ENCODE measurements at regions of chr1 and their contacts with region 1.

Region 1: GRCh38 chr1:247373721-247374141 is 42.1 kb upstream of the ZNF496 start:
- DNase-seq: peak; percentile 82
- ATAC-seq: peak; percentile 78
- H3K4me3 Mint-ChIP-seq: peak overlapping the region; percentile 20
- H3K27ac Mint-ChIP-seq: no peak overlapping the region
- H3K4me1 Mint-ChIP-seq: peaks cover 2% of the 10 kb centered on the region
- H3K27me3 Mint-ChIP-seq: peaks cover 11% of the 10 kb centered on the region

Region 2: GRCh38 chr1:247131236-247131635 is 242.5 kb before region 1 on chr1:
- CTCF ChIA-PET with region 1: no interaction called
- POLR2A ChIA-PET with region 1: no interaction called
- intact Hi-C with region 1: no loop called
- DNase-seq: no peak
- ATAC-seq: no peak
- H3K4me3 Mint-ChIP-seq: no peak overlapping the region
- H3K27ac Mint-ChIP-seq: no peak overlapping the region
- H3K4me1 Mint-ChIP-seq: peaks cover 3% of the 10 kb centered on the region
- H3K27me3 Mint-ChIP-seq: no peaks in the 10 kb centered on the region

Region 3: GRCh38 chr1:247360991-247361731 is 12.6 kb before region 1 on chr1:
- CTCF ChIA-PET with region 1: interaction called, 13 read pairs
- POLR2A ChIA-PET with region 1: no interaction called
- intact Hi-C with region 1: no loop called
- DNase-seq: peak; percentile 20
- ATAC-seq: peak; percentile 51
- H3K4me3 Mint-ChIP-seq: no peak overlapping the region
- H3K27ac Mint-ChIP-seq: no peak overlapping the region
- H3K4me1 Mint-ChIP-seq: peaks cover 14% of the 10 kb centered on the region
- H3K27me3 Mint-ChIP-seq: peaks cover 42% of the 10 kb centered on the region

Region 4: GRCh38 chr1:247487057-247487456 is 113.3 kb after region 1 on chr1:
- CTCF ChIA-PET with region 1: interaction called, 62 read pairs
- POLR2A ChIA-PET with region 1: no interaction called
- intact Hi-C with region 1: loop called (anchors 1 kb)
- DNase-seq: peak; percentile 38
- ATAC-seq: peak; percentile 80
- H3K4me3 Mint-ChIP-seq: no peak overlapping the region
- H3K27ac Mint-ChIP-seq: no peak overlapping the region
- H3K4me1 Mint-ChIP-seq: no peaks in the 10 kb centered on the region
- H3K27me3 Mint-ChIP-seq: peaks cover 8% of the 10 kb centered on the region

Region 5: DNA sequence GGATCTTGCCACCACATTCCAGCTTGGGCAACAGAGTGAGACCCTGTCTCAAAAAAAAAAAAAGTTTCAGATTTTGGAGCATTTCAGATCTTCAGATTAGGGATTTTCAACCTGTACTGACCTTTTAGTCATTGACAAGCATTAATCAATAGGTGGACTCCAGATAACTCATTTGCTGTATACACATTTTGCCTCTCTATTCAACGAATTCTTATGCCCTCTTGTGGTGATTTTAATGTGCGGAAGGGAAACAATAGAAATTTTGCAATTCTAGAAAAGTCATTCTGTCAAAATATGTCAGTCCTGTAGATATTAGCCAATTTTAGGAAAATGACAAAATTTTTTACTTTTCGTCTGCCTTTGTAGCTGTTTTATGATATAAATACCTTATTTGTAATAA is 202.8 kb after region 1 on chr1:
- CTCF ChIA-PET with region 1: interaction called, 3 read pairs
- POLR2A ChIA-PET with region 1: no interaction called
- intact Hi-C with region 1: loop called (anchors 1 to 2 kb)
- DNase-seq: no peak
- ATAC-seq: peak; percentile 39
- H3K4me3 Mint-ChIP-seq: no peak overlapping the region
- H3K27ac Mint-ChIP-seq: no peak overlapping the region
- H3K4me1 Mint-ChIP-seq: no peaks in the 10 kb centered on the region
- H3K27me3 Mint-ChIP-seq: peaks cover 2% of the 10 kb centered on the region